Heart right ventricle (tissue), 16 donors: ENCODE measurements at regions of chr10 and their contacts with region 1.

Region 1: DNA sequence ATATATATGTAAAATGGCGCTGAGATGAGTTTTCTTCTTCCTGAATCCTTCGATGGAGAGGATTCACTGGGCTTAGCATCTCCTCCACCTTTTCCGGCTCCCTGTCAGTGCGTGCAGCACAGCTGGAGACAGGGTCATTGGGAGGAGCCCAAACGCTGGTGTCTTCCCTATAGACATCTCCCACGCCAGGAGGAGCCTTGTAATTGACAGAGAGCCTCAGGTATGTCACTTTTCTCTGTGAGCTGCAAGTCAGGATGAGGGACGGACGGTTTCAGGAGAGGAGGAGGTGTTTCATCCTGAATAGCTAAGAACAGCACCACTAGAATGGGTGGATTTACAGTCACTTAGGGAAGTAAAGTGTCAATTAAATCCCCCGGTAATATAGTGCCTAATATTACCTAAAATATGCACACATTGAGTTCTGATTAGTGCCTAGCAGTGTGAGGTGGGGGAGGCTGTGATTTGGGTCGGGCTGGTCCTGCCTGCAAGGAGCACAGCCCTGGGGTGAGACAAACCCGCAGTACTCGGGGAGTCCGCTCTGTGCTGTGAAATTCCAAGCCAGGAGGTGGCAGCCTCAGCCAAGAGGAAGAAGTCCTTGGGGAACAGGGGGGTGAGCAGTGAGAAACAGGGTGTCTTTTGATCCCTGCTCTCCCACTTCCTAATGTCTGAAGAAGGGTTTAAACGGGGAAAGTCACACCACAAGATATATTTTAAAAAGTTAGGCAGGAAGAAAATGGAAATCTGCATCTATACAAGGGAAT is 28.2 kb downstream of the IL15RA start:
- DNase-seq: peak; percentile 54 to 67
- ATAC-seq: peak in 6 of 8 donors; percentile 23 to 50 (median 40)
- H3K4me3 ChIP-seq: no peak overlapping the region
- H3K27ac ChIP-seq: peak overlapping the region in 2 of 10 donors; percentile 7 to 31
- H3K4me1 ChIP-seq: peaks cover 12 to 63% (median 36%) of the 10 kb centered on the region in 9 donors
- H3K27me3 ChIP-seq: no peaks in the 10 kb centered on the region
- CTCF ChIP-seq: peak; percentile 11 to 68 (median 52)

Region 2: DNA sequence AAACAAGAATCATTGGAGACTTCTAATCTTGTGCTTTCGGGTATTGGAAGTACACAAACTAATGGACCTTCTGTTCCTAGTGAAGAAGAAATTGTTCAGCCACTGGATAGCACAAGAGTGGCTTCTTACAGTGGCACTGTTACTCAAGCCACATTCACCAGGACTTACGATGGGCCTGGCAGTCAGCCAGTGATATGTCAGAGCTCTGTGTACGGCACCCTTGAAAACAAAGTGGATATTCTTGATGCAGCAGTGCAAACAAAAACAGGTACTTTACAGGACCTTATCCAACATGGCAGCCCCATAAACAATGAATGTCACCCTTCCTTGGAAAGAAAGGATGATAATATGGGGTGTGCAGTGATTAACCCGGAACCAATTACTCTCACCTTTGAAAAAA is 203.0 kb before region 1 on chr10:
- intact Hi-C with region 1: no loop called
- DNase-seq: peak in 1 of 2 donors; percentile 21
- ATAC-seq: peak in 4 of 8 donors; percentile 16 to 70 (median 60)
- H3K4me3 ChIP-seq: no peak overlapping the region
- H3K27ac ChIP-seq: no peak overlapping the region
- H3K4me1 ChIP-seq: peaks cover 0 to 4% (median 0%) of the 10 kb centered on the region in 9 donors
- H3K27me3 ChIP-seq: no peaks in the 10 kb centered on the region
- CTCF ChIP-seq: no peak

Region 3: GRCh38 chr10:5977471-5978229 is 28.5 kb after region 1 on chr10 and contains the start of gene IL15RA:
- intact Hi-C with region 1: loop called in 2 of 10 experiments (anchors 2 kb)
- DNase-seq: peak; percentile 76 to 78
- ATAC-seq: peak; percentile 83 to 90 (median 86)
- H3K4me3 ChIP-seq: peak within 1 kb of the TSS; percentile 68 to 97 (median 90)
- H3K27ac ChIP-seq: peak within 1 kb of the TSS; percentile 91 to 99 (median 96)
- H3K4me1 ChIP-seq: peaks cover 0 to 50% (median 21%) of the 10 kb centered on the region in 9 donors
- H3K27me3 ChIP-seq: no peaks in the 10 kb centered on the region
- CTCF ChIP-seq: peak in 5 of 9 donors; percentile 8 to 40 (median 38)
- total RNA-seq, gene IL15RA: 3.5 to 21.0 (median 5.6) TPM

Region 4: DNA sequence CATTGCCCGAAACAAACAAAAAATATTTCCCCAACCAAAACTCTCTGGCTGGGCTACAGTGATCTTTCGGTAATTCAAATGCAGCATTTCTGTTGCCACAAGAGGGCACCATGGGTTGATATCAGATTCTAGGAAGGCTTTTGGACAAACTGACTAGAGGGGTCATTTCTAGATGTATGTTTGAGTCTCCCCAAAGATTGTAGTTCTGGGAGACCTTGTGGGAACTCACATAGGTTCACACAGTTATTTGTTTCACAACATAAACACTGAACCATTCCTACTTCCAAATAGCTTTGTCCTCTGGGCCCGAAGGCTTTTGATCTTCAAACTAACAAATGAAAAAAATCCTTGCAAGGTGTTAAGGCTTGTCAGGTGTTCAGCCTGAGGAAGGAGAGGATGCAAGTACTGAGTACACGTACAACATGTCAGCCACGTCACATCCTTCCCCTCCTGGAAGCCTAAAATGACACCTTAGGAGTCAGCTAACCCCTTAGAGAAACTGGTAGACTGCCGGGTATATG is 65.1 kb after region 1 on chr10:
- intact Hi-C with region 1: loop called in 2 of 10 experiments (anchors 2 to 10 kb)
- DNase-seq: peak in 1 of 2 donors; percentile 75
- ATAC-seq: peak in 7 of 8 donors; percentile 23 to 63 (median 55)
- H3K4me3 ChIP-seq: peak overlapping the region in 1 of 10 donors; percentile 33
- H3K27ac ChIP-seq: peak overlapping the region in 2 of 10 donors; percentile 11 to 48
- H3K4me1 ChIP-seq: peaks cover 0 to 21% (median 8%) of the 10 kb centered on the region in 9 donors
- H3K27me3 ChIP-seq: no peaks in the 10 kb centered on the region
- CTCF ChIP-seq: peak; percentile 52 to 88 (median 79)

Region 5: GRCh38 chr10:6050801-6051445 is 101.7 kb after region 1 on chr10:
- intact Hi-C with region 1: loop called in 1 of 10 experiments (anchors 5 kb)
- DNase-seq: peak; percentile 55 to 69
- ATAC-seq: peak in 7 of 8 donors; percentile 68 to 75 (median 71)
- H3K4me3 ChIP-seq: peak overlapping the region in 9 of 10 donors; percentile 5 to 59 (median 39)
- H3K27ac ChIP-seq: peak overlapping the region; percentile 37 to 89 (median 76)
- H3K4me1 ChIP-seq: peaks cover 0 to 52% (median 37%) of the 10 kb centered on the region in 9 donors
- H3K27me3 ChIP-seq: no peaks in the 10 kb centered on the region
- CTCF ChIP-seq: peak; percentile 10 to 64 (median 37)

Region 6: DNA sequence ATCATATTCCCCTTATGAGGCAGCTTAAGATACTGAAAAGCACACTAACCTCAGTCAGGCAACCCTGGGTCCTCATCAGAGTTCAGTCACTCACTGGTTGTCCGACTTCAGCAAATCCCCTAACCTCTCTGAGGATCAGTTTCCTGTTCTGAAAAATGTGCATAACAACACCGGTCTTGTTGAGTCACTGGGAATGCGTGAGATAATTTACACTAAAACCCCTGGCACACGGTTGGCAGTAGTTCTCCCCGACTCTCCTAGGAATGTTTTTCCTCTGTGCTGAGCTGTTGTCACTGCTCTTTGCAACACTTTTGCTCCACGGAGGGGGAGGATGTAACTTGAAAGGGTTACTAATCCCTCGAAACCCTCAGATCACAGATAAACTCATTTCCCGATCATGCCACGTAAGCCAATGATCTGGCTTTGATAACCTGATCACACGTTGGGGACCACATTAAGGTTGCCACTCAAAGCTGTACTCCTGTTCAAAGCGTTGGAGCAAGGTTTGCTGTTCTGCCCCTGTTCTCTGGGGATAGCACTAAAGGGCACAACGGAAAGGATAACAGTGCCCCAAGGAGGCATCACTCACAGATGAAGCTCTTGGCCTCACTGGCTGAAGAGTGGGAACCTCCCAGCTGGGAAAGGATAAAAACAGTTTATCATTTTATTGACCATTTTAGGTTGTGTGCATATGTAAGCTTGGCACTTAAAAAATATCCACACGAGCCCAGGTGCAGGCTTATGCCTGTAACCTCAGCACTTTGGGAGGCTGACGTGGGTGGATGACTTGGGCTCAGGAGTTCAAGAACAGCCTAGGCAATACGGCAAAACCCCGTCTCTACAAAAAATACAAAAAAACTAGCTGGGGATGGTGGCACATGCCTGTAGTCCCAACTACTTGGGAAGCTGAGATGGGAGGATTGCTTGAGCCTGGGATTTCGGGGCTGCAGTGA is 134.6 kb after region 1 on chr10:
- intact Hi-C with region 1: loop called in 5 of 10 experiments (anchors 5 to 10 kb)
- DNase-seq: no peak
- ATAC-seq: peak in 1 of 8 donors; percentile 4
- H3K4me3 ChIP-seq: no peak overlapping the region
- H3K27ac ChIP-seq: peak overlapping the region in 5 of 10 donors; percentile 7 to 51 (median 9)
- H3K4me1 ChIP-seq: peaks cover 0 to 43% (median 32%) of the 10 kb centered on the region in 9 donors
- H3K27me3 ChIP-seq: peaks cover 0 to 5% (median 0%) of the 10 kb centered on the region in 7 donors
- CTCF ChIP-seq: no peak